Activated CD4-positive, alpha-beta T cell treated with anti-CD3 and anti-CD28 coated beads, Interleukin-2, amount 10 ng/mL, durations not matched to agents 24 days and 14 days (primary cell): ENCODE measurements at regions of chr12 and their contacts with region 1.

Region 1: GRCh38 chr12:57771708-57772428 is at the start of gene METTL1:
- DNase-seq: peak; percentile 98
- H3K4me3 Mint-ChIP-seq: peak within 1 kb of the TSS; percentile 97
- H3K27ac Mint-ChIP-seq: peak within 1 kb of the TSS; percentile 99
- H3K4me1 Mint-ChIP-seq: peaks cover 21% of the 10 kb centered on the region
- H3K27me3 Mint-ChIP-seq: no peaks in the 10 kb centered on the region
- total RNA-seq, gene METTL1: 72.2 and 79.8 TPM in 2 replicates

Region 2: DNA sequence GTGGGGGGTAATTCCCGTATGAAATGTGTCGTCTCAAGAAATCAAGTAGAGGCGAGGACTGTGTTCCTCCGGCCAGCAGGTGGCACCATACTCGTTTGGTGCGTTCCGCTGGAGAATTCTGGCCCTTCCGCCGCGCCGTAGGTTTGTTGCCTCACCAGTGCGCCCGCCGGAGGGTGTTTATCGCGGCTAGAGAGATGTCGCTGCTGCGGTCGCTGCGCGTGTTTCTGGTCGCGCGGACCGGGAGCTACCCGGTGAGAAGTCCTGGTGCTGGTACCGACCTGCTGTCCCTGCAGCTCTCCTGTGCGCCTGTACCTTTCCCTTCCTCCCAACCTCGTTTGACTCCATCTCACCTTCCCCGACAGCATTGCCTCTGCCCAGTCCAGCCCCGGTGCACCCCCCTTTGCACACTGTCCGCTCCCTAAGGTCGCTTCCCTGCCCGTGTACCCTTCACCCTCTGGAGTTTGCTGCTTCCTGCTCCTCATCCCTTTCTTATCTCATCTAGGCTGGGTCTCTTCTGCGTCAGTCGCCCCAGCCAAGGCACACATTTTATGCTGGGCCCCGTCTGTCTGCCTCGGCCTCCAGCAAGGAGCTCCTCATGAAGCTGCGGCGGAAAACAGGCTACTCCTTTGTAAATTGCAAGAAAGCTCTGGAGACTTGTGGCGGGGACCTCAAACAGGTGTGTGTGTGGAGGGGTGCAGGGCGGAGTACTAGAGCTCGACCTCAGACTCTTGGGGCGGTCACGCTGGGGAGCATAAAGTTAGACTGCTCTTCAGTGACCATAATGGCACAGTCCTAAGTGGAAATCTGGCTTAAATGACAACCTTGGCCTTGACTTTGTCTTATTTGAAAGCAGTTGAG is 11.0 kb after region 1 on chr12 and contains the start of gene TSFM:
- intact Hi-C with region 1: loop called (anchors 1 kb)
- DNase-seq: peak; percentile 99
- H3K4me3 Mint-ChIP-seq: peak within 1 kb of the TSS; percentile 99
- H3K27ac Mint-ChIP-seq: peak within 1 kb of the TSS; percentile 99
- H3K4me1 Mint-ChIP-seq: peaks cover 30% of the 10 kb centered on the region
- H3K27me3 Mint-ChIP-seq: no peaks in the 10 kb centered on the region
- total RNA-seq, gene TSFM: 62.5 and 64.3 TPM in 2 replicates